RWPE1 (cell line): ENCODE measurements at regions of chr10 and their contacts with region 1.

Region 1: DNA sequence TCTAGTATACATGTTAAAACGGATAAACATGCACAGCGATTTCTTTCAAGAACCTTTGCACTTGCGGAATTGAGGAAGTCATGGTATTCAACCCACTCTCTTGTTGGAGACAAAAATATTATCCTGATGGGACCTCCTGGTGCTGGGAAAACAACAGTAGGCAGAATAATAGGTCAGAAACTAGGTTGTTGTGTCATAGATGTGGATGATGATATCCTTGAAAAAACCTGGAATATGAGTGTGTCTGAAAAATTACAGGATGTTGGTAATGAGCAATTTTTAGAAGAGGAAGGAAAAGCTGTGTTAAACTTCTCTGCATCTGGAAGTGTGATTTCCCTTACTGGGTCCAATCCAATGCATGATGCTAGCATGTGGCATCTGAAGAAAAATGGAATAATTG is 6.9 kb downstream of the THNSL1 start:
- DNase-seq: no peak
- H3K27ac ChIP-seq: no peak overlapping the region
- CTCF ChIP-seq: no peak

Region 2: GRCh38 chr10:25080880-25081581 is 57.8 kb after region 1 on chr10:
- CTCF ChIA-PET with region 1: interaction called, 23 read pairs
- POLR2A ChIA-PET with region 1: no interaction called
- DNase-seq: peak; percentile 78
- H3K27ac ChIP-seq: no peak overlapping the region
- CTCF ChIP-seq: peak; percentile 93

Region 3: DNA sequence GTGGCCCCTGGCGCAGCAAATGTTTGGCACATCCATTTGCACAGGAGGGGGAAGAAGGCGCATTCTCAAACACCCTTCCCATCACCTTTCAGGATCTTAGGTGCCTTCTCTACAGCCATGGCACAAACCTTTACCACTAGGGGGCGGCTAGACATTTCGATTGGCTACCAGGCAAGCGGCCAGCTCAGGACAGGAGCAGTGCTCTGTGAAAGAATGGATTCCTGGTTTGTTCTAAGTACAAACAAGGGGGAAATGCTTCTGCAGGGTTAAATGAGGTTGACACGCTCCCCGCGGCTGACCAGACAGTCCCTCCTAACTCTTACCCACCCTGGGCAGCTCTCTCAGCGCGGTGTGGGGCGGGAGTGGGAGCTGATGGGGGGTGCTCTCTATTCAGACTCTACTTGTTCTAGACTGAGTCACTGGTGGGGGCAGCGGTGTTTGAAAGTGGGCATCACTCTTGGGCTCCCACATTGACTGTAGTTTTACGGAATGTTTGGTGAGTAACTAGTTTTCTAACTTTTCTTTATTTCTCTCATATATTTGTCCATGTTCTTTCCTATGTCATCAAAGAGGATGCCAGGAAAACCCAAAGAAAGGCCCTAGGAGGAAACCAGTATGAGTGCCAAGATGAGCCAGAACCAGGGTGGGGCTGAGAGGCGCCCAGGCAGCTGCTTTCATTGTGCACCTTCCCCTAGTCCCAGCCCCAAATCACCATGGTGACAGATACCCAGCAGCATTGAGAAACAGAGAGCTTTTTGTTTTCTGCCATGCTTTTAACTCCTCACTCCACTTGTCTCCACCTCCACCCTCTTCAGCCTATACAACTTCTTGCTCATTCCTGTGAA is 90.1 kb after region 1 on chr10:
- CTCF ChIA-PET with region 1: no interaction called
- POLR2A ChIA-PET with region 1: no interaction called
- DNase-seq: peak; percentile 54
- H3K27ac ChIP-seq: no peak overlapping the region
- CTCF ChIP-seq: peak; percentile 83